K562 (cell line): ENCODE measurements at regions of chr18 and their contacts with region 1.

Region 1: GRCh38 chr18:39909706-39910105 is 2045.3 kb upstream of the PIK3C3 start:
- DNase-seq: no peak
- ATAC-seq: no peak
- H3K4me3 ChIP-seq: no peak overlapping the region
- H3K27ac ChIP-seq: no peak overlapping the region
- H3K4me1 ChIP-seq: no peaks in the 10 kb centered on the region
- H3K27me3 ChIP-seq: no peaks in the 10 kb centered on the region
- CTCF ChIP-seq: no peak
- EP300 ChIP-seq: no peak
- POLR2A ChIP-seq: no peak
- RAD21 ChIP-seq: no peak

Region 2: GRCh38 chr18:39806525-39806924 is 103.2 kb before region 1 on chr18:
- CTCF ChIA-PET with region 1: no interaction called
- POLR2A ChIA-PET with region 1: no interaction called
- in situ Hi-C with region 1: no loop called
- intact Hi-C with region 1: no loop called
- DNase-seq: no peak
- ATAC-seq: no peak
- H3K4me3 ChIP-seq: no peak overlapping the region
- H3K27ac ChIP-seq: no peak overlapping the region
- H3K4me1 ChIP-seq: no peaks in the 10 kb centered on the region
- H3K27me3 ChIP-seq: no peaks in the 10 kb centered on the region; a peak in 1 of 5 replicates
- CTCF ChIP-seq: no peak
- EP300 ChIP-seq: no peak
- POLR2A ChIP-seq: no peak
- RAD21 ChIP-seq: no peak

Region 3: GRCh38 chr18:39994498-39994897 is 84.8 kb after region 1 on chr18:
- CTCF ChIA-PET with region 1: no interaction called
- POLR2A ChIA-PET with region 1: no interaction called
- in situ Hi-C with region 1: no loop called
- intact Hi-C with region 1: loop called (anchors 10 kb)
- DNase-seq: no peak
- ATAC-seq: no peak
- H3K4me3 ChIP-seq: no peak overlapping the region
- H3K27ac ChIP-seq: no peak overlapping the region
- H3K4me1 ChIP-seq: no peaks in the 10 kb centered on the region
- H3K27me3 ChIP-seq: no peaks in the 10 kb centered on the region
- CTCF ChIP-seq: no peak
- EP300 ChIP-seq: no peak
- POLR2A ChIP-seq: no peak
- RAD21 ChIP-seq: no peak

Region 4: DNA sequence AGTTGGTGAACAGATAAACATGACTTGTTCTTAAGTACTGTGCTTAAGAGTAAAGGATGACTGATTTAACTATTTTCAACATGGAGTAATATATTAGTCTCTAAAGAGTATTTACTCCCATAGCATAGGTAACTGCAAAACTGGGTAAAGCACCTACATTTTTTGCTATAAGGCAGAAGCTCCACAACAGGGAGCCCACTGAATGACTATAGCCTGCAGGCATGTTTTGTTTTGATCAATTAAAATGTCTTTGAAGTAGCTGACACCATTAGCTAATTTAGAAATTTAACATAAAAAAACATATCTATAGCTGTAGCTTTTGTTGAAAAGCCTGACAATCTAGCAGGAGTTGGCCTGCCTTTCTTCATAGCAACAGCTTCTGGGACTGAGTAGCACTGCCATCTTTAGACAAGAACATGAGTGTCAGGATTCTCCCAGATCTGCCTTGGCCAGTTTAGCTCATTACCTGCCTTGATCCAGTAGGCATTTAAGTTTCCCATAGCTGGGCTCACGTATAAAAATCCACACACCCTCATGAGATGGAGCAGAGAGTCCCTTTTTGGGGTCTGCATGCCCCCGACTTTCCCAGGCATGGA is 110.2 kb after region 1 on chr18:
- CTCF ChIA-PET with region 1: no interaction called
- POLR2A ChIA-PET with region 1: no interaction called
- in situ Hi-C with region 1: no loop called
- intact Hi-C with region 1: no loop called
- DNase-seq: no peak
- ATAC-seq: no peak
- H3K4me3 ChIP-seq: no peak overlapping the region
- H3K27ac ChIP-seq: no peak overlapping the region
- H3K4me1 ChIP-seq: no peaks in the 10 kb centered on the region
- H3K27me3 ChIP-seq: no peaks in the 10 kb centered on the region
- CTCF ChIP-seq: no peak
- EP300 ChIP-seq: no peak
- POLR2A ChIP-seq: no peak
- RAD21 ChIP-seq: no peak